ENCODE measurements at regions of chr2 and their contacts with region 1.

Region 1: GRCh38 chr2:196000551-196000950 is 68.1 kb downstream of the DNAH7 start:
- DNase-seq: no peak
- ATAC-seq: no peak
- H3K4me3 Mint-ChIP-seq: no peak overlapping the region
- H3K27ac Mint-ChIP-seq: no peak overlapping the region
- H3K4me1 Mint-ChIP-seq: peaks cover 6% of the 10 kb centered on the region
- H3K27me3 Mint-ChIP-seq: peaks cover 2% of the 10 kb centered on the region

Region 2: DNA sequence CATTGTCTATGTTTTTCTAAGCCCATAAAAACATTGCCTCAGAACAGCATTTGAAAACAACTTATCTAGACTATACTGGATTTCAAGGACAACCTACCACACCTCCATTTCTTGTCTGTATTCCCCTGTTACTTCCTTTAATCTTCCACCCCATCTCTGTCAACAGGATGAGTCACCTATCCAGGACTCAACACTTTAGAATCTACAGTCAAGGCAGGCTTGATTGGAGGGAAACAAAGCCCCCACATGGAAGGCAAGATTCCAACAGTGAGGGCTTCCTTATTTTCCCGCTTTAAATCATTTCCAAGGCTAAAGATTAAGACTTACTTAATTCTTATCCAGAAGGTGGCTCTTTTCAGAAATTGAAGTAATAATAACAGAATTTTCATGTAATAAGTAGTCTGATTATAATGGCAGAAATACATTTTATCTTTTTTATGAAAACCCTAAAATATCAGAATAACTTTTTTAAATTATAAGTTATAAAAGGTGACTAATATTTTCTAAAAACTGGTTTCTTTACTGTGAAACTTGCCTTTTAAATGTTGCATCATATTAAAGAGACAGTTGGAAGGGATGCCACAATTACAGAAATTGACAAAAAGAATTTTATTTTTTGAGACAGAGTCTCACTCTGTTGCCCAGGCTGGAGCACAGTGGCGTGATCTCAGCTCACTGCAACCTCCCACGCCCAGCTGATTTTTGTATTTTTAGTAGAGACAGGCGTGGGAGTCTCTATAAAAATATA is 500.3 kb after region 1 on chr2:
- POLR2A ChIA-PET with region 1: interaction called, 10 read pairs
- DNase-seq: no peak
- ATAC-seq: no peak
- H3K4me3 Mint-ChIP-seq: no peak overlapping the region
- H3K27ac Mint-ChIP-seq: no peak overlapping the region
- H3K4me1 Mint-ChIP-seq: no peaks in the 10 kb centered on the region
- H3K27me3 Mint-ChIP-seq: peaks cover 8% of the 10 kb centered on the region

Measured in activated naive CD8-positive, alpha-beta T cell treated with anti-CD3 and anti-CD28 coated beads, Interleukin-2, amount 10 ng/mL, durations not matched to agents 7 days and 5 days (primary cell).